PC-9 (cell line): ENCODE measurements at regions of chr2 and their contacts with region 1.

Region 1: GRCh38 chr2:113282747-113283533 is 4.2 kb upstream of the PAX8 start:
- DNase-seq: peak; percentile 62 to 79
- H3K4me3 ChIP-seq: no peak overlapping the region
- H3K27ac ChIP-seq: peak overlapping the region; percentile 99
- H3K4me1 ChIP-seq: peaks cover 65% of the 10 kb centered on the region
- H3K27me3 ChIP-seq: no peaks in the 10 kb centered on the region
- CTCF ChIP-seq: peak; percentile 54; the same call in 1 of the 2 replicates

Region 2: GRCh38 chr2:112985090-112985489 is 297.9 kb before region 1 on chr2:
- CTCF ChIA-PET with region 1: no interaction called
- POLR2A ChIA-PET with region 1: no interaction called
- intact Hi-C with region 1: no loop called
- DNase-seq: no peak
- H3K4me3 ChIP-seq: no peak overlapping the region
- H3K27ac ChIP-seq: no peak overlapping the region
- H3K4me1 ChIP-seq: no peaks in the 10 kb centered on the region
- H3K27me3 ChIP-seq: no peaks in the 10 kb centered on the region
- CTCF ChIP-seq: no peak

Region 3: GRCh38 chr2:113117541-113118262 is 165.2 kb before region 1 on chr2:
- CTCF ChIA-PET with region 1: no interaction called
- POLR2A ChIA-PET with region 1: no interaction called
- intact Hi-C with region 1: no loop called
- DNase-seq: peak; percentile 89 to 90
- H3K4me3 ChIP-seq: no peak overlapping the region
- H3K27ac ChIP-seq: peak overlapping the region; percentile 69
- H3K4me1 ChIP-seq: peaks cover 26% of the 10 kb centered on the region
- H3K27me3 ChIP-seq: no peaks in the 10 kb centered on the region
- CTCF ChIP-seq: no peak

Region 4: GRCh38 chr2:113157118-113157896 is 125.6 kb before region 1 on chr2:
- CTCF ChIA-PET with region 1: no interaction called
- POLR2A ChIA-PET with region 1: interaction called, 16 read pairs
- intact Hi-C with region 1: no loop called
- DNase-seq: peak; percentile 48 to 82
- H3K4me3 ChIP-seq: peak overlapping the region; percentile 87
- H3K27ac ChIP-seq: peak overlapping the region; percentile 56
- H3K4me1 ChIP-seq: peaks cover 29% of the 10 kb centered on the region
- H3K27me3 ChIP-seq: no peaks in the 10 kb centered on the region
- CTCF ChIP-seq: no peak

Region 5: GRCh38 chr2:113211226-113212105 is 71.5 kb before region 1 on chr2:
- CTCF ChIA-PET with region 1: no interaction called
- POLR2A ChIA-PET with region 1: no interaction called
- intact Hi-C with region 1: no loop called
- DNase-seq: peak; percentile 58 to 67
- H3K4me3 ChIP-seq: no peak overlapping the region
- H3K27ac ChIP-seq: peak overlapping the region; percentile 50
- H3K4me1 ChIP-seq: peaks cover 20% of the 10 kb centered on the region
- H3K27me3 ChIP-seq: no peaks in the 10 kb centered on the region
- CTCF ChIP-seq: no peak

Region 6: DNA sequence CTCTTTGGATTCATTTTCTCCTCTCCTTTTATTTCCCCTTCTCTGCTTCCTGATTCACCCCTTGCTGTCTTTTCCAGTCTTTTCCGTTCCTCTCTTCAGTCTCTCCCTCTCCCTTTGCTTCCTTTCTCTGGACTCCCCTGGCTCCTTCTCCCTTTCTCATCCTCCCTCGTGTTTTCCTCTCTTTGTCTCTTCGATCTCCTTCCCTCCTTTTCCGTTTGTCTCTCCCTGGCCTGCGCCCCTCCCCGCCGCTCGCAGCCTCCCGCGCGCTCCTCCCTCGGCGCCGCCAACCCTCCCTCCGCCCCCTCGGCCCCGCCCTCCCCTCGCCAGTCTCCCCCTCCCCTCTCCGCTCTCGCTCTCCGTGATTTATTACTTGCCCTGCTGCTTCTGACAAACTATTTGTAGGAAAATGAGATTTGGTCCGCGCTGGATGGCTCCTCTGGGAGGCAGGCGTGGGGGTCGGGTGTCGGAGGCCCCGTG is 41.8 kb after region 1 on chr2:
- CTCF ChIA-PET with region 1: no interaction called
- POLR2A ChIA-PET with region 1: no interaction called
- intact Hi-C with region 1: loop called (anchors 1 kb)
- DNase-seq: peak; percentile 45 to 67
- H3K4me3 ChIP-seq: peak overlapping the region; percentile 74
- H3K27ac ChIP-seq: 0 out of 2 replicates have a peak overlapping the region, but pooled peaks have one; percentile 10
- H3K4me1 ChIP-seq: peaks cover 30% of the 10 kb centered on the region
- H3K27me3 ChIP-seq: no peaks in the 10 kb centered on the region
- CTCF ChIP-seq: no peak

Region 7: GRCh38 chr2:113370478-113371091 is 87.6 kb after region 1 on chr2:
- CTCF ChIA-PET with region 1: no interaction called
- POLR2A ChIA-PET with region 1: no interaction called
- intact Hi-C with region 1: loop called (anchors 1 kb)
- DNase-seq: peak; percentile 69 to 73
- H3K4me3 ChIP-seq: no peak overlapping the region
- H3K27ac ChIP-seq: no peak overlapping the region
- H3K4me1 ChIP-seq: peaks cover 12% of the 10 kb centered on the region
- H3K27me3 ChIP-seq: no peaks in the 10 kb centered on the region
- CTCF ChIP-seq: peak; percentile 75

Region 8: DNA sequence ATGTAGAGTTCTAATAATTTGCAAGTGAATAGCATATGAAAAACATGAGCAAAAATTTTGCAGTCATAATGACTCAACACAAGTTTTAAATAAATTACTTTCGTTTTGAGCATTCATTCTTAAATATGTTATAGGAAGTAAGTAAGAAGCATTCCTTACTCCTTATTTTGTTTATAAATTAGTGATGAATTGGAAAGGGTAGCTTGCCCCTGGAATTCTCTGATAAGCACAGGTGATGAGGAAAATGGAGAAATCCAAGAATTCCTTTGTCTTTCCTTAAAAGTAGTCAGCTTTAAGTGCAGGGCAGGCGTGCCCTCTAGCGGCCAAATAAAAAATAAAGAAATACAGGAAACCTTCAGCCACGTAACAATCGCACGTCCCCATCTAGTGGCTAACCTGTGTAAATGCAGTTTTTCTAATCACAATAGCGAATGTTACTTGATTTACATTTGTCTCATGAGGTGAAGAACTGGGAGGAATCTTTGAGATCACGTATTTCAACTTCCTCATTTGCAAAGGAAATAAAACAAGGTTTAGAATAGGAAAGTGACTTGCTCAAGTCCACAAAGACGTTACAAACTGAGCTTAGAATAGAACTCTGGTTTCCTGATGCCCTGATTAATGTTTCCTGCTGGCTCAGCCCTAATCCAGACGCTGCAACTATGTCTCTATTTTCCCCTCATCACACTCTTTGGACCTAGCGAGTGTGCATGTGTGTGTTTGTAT is 107.3 kb after region 1 on chr2:
- CTCF ChIA-PET with region 1: no interaction called
- POLR2A ChIA-PET with region 1: no interaction called
- intact Hi-C with region 1: no loop called
- DNase-seq: peak; percentile 59 to 63
- H3K4me3 ChIP-seq: no peak overlapping the region
- H3K27ac ChIP-seq: peak overlapping the region; percentile 56
- H3K4me1 ChIP-seq: peaks cover 5% of the 10 kb centered on the region
- H3K27me3 ChIP-seq: no peaks in the 10 kb centered on the region
- CTCF ChIP-seq: peak; percentile 94